OCI-LY7 (cell line): ENCODE measurements at regions of chr7 and their contacts with region 1.

Region 1: DNA sequence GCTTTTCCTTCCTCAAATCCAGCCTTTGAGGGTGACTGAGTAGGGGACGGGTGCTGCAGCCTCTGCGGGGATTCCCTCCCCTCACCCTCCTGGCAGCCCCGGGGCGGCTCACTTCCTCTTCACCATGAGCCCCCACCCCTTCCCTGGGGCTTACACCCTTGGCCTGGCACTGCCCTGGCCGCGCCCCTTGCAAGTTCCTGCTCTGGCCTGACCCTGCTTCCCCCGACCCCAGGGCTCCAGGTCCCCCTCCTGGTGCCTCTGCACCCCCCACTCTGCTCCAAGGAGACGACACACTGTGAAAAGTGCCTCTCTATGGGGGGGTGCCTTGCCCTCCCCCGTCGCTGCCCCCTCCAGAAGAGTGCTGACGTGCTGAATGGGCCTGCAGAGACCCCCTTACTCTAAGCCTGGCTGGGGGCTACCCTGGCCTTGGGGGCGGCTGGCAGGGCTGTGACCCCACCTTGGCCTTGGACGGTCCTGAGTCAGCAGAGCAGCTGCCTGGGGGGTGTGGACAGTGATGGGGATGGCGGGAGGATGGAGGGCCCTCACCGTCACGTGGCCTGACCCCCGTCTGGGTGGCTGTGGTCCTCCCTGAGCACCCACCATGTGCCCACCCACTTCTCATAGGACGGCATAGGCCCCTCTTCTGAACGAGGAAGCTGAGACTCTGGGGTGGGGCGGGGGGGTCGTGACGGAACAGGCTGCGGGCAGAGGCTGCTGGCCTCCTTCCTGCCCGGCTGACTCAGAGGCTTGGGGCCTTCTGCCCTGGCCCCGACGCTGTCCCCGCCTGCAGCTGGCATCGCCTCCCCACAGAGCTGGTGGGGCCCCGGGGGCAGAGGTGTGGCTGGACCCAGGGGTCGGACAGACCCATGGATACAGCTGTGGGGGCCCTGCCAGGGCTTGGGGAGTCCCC is 9.8 kb downstream of the LFNG start:
- DNase-seq: peak; percentile 76
- H3K4me3 ChIP-seq: peak overlapping the region; percentile 9
- H3K27ac ChIP-seq: peak overlapping the region; percentile 31
- H3K4me1 ChIP-seq: peaks cover 30% of the 10 kb centered on the region
- CTCF ChIP-seq: no peak

Region 2: GRCh38 chr7:2510909-2511768 is 18.3 kb before region 1 on chr7:
- CTCF ChIA-PET with region 1: interaction called, 5 read pairs
- POLR2A ChIA-PET with region 1: interaction called, 10 read pairs
- intact Hi-C with region 1: no loop called
- DNase-seq: peak; percentile 76
- H3K4me3 ChIP-seq: peak overlapping the region; percentile 43
- H3K27ac ChIP-seq: peak overlapping the region; percentile 71
- H3K4me1 ChIP-seq: peaks cover 50% of the 10 kb centered on the region
- CTCF ChIP-seq: no peak

Region 3: DNA sequence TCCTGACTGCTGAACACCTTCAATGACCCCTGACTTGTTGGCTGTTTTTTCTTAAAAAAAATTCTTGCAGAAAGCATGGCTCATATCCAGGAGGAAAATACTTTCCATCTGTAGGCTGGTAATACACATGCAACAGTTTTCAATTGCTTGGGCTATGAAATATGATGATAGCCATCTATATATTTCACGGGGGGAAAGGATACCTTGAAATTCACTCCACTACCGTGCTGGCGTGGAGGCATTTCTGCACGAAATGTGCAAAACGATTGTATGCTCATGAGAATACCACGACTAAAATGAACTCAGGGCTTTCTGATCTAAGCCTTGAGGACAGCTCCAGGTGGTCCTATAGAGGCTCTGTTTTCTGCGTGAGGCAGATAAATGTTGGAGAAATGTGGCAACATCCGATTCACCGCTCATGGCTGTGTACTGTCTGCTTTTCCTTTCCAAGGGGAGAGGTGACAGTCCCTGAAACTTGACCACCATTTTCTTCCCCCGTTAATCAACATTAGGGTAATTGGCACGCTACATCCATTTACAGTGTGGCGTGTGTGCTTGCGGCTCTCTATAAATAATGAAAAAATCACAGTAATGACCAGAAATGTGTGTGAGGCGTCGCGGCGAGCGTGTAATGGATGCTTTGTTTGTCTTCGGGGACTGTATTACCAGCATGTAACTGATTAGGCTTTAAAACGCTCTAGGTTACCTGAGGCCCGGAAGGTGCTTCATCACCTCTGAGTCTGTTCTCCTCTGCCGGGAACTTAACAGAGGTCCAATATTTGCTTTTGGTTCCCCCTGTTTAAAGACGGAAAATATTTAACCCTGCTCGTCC is 527.0 kb after region 1 on chr7:
- CTCF ChIA-PET with region 1: no interaction called
- POLR2A ChIA-PET with region 1: no interaction called
- intact Hi-C with region 1: no loop called
- DNase-seq: no peak
- H3K4me3 ChIP-seq: no peak overlapping the region
- H3K27ac ChIP-seq: no peak overlapping the region
- H3K4me1 ChIP-seq: no peaks in the 10 kb centered on the region
- CTCF ChIP-seq: no peak